ENCODE measurements at regions of chr5 and their contacts with region 1.

Region 1: GRCh38 chr5:128083033-128083810 is at the start of gene SLC12A2:
- DNase-seq: peak; percentile 91
- H3K4me3 Mint-ChIP-seq: peak within 1 kb of the TSS; percentile 90
- H3K27ac Mint-ChIP-seq: peak within 1 kb of the TSS; percentile 80
- H3K4me1 Mint-ChIP-seq: peaks cover 61% of the 10 kb centered on the region
- H3K27me3 Mint-ChIP-seq: no peaks in the 10 kb centered on the region
- total RNA-seq, gene SLC12A2: 14.6 to 14.8 TPM

Region 2: DNA sequence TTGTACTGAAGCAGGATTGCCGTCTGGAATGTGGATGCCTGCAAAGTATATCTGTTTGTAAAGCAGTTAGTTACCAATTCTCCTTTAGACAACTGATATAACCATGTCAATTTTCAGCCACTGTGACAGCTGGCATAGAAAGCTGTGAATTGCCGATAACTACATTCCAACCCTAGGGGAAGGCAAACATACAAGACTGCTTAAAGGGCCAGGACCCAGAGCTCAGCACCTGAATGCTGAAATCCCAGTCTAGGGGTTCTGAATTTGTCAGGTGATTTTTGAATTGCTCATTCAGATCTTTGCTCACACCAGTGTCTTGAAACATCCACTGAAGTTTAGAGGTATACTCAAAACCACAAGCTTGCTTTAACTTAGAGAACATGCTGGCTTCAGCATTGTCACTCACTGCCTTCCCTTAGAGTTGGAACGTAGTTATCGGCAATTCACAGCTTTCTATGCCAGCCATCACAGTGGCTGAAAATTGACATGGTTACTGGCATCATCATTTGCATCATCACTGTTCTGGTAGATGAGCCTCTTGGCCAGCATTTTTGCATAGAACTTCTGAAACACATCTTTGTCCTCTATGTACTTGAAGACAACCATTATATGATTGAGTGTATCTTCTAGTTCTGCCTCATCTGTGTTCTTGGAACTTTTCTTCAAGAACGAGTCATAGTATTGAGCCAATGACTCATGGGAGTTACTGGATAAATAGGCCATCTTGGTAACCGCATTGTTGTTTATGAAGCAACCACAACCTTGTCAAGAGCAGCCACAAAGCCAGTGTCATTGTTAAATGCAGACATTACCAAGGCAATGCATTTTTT is 297.9 kb before region 1 on chr5:
- CTCF ChIA-PET with region 1: no interaction called
- POLR2A ChIA-PET with region 1: interaction called, 17 read pairs
- DNase-seq: peak; percentile 52
- H3K4me3 Mint-ChIP-seq: peak overlapping the region; percentile 31
- H3K27ac Mint-ChIP-seq: peak overlapping the region; percentile 91
- H3K4me1 Mint-ChIP-seq: peaks cover 39% of the 10 kb centered on the region
- H3K27me3 Mint-ChIP-seq: peaks cover 9% of the 10 kb centered on the region

Region 3: DNA sequence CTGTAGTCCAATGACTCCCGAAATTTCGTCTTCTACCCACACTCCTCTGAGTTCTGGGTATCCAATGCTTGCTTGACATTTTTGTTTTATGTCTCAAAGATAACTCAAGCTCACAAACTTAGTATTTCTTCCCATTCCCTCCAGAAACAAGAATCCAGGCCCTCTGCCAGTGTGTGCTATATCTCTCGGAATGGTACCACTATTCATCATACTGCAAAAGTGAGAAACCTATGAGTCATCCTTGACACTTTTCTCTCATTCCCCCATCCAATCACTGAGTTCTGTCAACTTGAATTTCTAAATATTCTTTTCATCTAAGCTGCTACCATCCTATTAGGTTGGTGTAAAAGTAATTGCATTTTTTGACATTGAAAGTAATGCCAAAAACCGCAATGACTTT is 10.1 kb after region 1 on chr5:
- CTCF ChIA-PET with region 1: interaction called, 4 read pairs
- POLR2A ChIA-PET with region 1: interaction called, 15 read pairs
- DNase-seq: no peak
- H3K4me3 Mint-ChIP-seq: no peak overlapping the region
- H3K27ac Mint-ChIP-seq: no peak overlapping the region
- H3K4me1 Mint-ChIP-seq: peaks cover 6% of the 10 kb centered on the region
- H3K27me3 Mint-ChIP-seq: no peaks in the 10 kb centered on the region

Measured in activated CD4-positive, alpha-beta memory T cell treated with anti-CD3 and anti-CD28 coated beads, Interleukin-2, amount 10 ng/mL, durations not matched to agents 7 days and 5 days (primary cell).